T-cell (primary cell): ENCODE measurements at regions of chr13 and their contacts with region 1.

Region 1: DNA sequence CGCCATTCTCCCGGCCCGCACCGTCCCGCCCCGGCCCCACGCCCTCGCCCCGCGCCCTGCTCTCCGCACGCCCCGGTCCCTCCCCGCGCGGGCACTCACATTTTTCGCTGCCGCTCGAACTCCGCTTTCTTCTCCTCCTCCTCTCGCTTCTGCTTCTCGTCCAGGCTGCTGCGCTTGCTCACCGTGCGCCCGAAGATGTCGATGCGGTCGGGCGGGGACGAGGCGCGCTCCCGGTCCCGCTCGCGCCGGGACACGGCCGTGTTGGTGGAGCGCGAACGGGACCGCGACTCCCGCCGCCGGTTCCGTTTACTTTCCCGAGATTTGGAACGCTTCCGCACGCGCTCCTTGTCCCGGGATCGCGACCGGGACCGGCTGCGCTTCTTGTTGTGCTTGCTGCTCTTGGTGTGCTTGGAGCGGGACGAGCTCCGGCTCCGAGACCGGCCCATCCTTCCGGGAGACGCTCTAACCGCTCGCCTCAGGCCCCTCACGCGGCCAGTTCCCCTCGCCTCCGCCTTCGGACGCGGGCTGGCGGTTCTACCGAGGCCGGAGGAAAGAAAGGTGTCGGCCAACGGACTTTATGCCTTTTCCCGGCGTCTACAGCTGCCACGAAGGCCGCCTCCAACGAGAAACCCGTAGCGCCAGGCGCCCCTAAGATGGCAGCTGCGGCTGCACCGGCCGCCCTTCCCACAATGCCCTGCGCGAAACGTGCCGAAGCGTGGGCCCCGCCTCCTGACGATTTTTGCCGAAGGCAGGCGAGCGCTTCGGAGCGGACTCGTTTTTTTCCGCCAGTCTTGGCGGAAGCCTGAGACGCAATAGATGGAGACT is at the start of gene ARGLU1:
- DNase-seq: peak; percentile 84 to 99 (median 93)
- ATAC-seq: peak; percentile 83 to 91 (median 86)
- H3K4me3 ChIP-seq: peak within 1 kb of the TSS; percentile 96 to 99
- H3K4me3 Mint-ChIP-seq: peak within 1 kb of the TSS; percentile 97 to 99 (median 98)
- H3K27ac ChIP-seq: peak within 1 kb of the TSS; percentile 98
- H3K27ac Mint-ChIP-seq: peak within 1 kb of the TSS; percentile 91 to 94
- H3K4me1 ChIP-seq: peaks cover 36 to 38% of the 10 kb centered on the region in 2 experiments
- H3K4me1 Mint-ChIP-seq: peaks cover 58 to 69% (median 59%) of the 10 kb centered on the region in 3 donors
- H3K27me3 ChIP-seq: no peaks in the 10 kb centered on the region
- H3K27me3 Mint-ChIP-seq: no peaks in the 10 kb centered on the region
- total RNA-seq, gene ARGLU1: 158 to 197 (median 184) TPM

Region 2: DNA sequence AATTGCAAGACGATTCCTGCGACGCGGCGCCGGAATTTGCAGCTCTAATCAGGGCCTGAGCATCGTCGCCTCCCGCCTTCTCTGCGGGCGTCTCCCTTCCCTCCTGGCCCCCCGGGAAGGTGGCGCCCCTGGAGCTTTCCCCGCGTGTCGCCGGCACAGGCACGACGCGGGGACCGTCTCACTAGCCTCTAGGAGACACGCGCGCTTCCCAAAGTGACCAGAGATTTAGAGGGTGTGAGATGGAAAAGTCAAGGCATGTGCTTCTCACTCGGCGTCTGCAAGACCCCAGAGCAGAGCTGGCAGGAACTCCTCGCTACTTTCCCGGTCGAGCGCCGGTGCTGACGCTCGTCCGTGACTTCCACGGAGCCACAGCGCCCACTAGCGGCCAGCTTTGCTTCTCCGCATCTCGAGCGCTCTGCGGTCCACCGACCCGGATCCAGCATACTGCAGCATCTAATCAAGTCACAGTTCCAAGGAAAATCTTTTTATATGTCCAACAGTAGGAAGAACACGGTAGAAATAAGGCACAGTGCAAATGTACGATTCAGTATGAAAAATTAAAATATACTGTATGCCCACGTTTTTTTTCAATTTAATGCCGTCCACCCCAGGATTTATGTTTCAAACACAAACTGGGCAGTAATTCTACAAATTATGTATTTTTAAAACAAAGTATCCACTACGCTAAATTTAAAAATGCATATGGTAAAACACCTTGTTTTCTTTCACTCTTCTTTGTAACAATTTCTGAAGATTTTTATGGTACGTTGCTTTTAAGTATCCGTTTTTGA is 31.2 kb before region 1 on chr13:
- CTCF ChIA-PET with region 1: interaction called, 7 to 11 read pairs
- POLR2A ChIA-PET with region 1: interaction called in 1 of 2 experiments, 4 read pairs
- DNase-seq: peak; percentile 52 to 94 (median 82)
- ATAC-seq: peak; percentile 38 to 53 (median 42)
- H3K4me3 ChIP-seq: peak overlapping the region; percentile 63 to 71
- H3K4me3 Mint-ChIP-seq: peak overlapping the region; percentile 89 to 90 (median 90)
- H3K27ac ChIP-seq: no peak overlapping the region
- H3K27ac Mint-ChIP-seq: peak overlapping the region; percentile 18 to 66
- H3K4me1 ChIP-seq: peaks cover 9 to 24% of the 10 kb centered on the region in 2 experiments
- H3K4me1 Mint-ChIP-seq: peaks cover 21 to 25% (median 21%) of the 10 kb centered on the region in 3 donors
- H3K27me3 ChIP-seq: peaks cover 8 to 27% of the 10 kb centered on the region in 2 experiments
- H3K27me3 Mint-ChIP-seq: peaks cover 19 to 28% of the 10 kb centered on the region in 2 donors